Left colon (tissue), 2 donors: ENCODE measurements at regions of chr16 and their contacts with region 1.

Region 1: GRCh38 chr16:813204-813915 is 12.8 kb upstream of the GNG13 start:
- DNase-seq: peak in 1 of 2 donors; percentile 61
- ATAC-seq: peak; percentile 74

Region 2: GRCh38 chr16:1054660-1055556 is 241.5 kb after region 1 on chr16:
- intact Hi-C with region 1: loop called (anchors 5 to 10 kb)
- DNase-seq: peak in 1 of 2 donors; percentile 71
- ATAC-seq: peak; percentile 85